ENCODE measurements at regions of chr5 and their contacts with region 1.

Region 1: GRCh38 chr5:43040287-43041098 is at the start of gene ANXA2R:
- DNase-seq: peak; percentile 92 to 95 (median 93)
- ATAC-seq: peak; percentile 79
- H3K4me3 ChIP-seq: no peak within 1 kb of the TSS
- H3K4me1 ChIP-seq: peaks cover 32% of the 10 kb centered on the region
- CTCF ChIP-seq: peak; percentile 82
- total RNA-seq, gene ANXA2R: 1.3 to 2.3 (median 1.8) TPM

Region 2: GRCh38 chr5:42994246-42995151 is 46.0 kb before region 1 on chr5:
- intact Hi-C with region 1: loop called in 1 of 2 experiments (anchors 5 kb)
- DNase-seq: peak; percentile 88 to 94 (median 89)
- ATAC-seq: peak; percentile 81
- H3K4me3 ChIP-seq: no peak overlapping the region
- H3K4me1 ChIP-seq: peaks cover 3% of the 10 kb centered on the region
- CTCF ChIP-seq: peak; percentile 90

Measured in mucosa of descending colon (tissue), 3 donors.